ENCODE measurements at regions of chr6 and their contacts with region 1.

Region 1: GRCh38 chr6:12890171-12890790 is 173.7 kb downstream of the PHACTR1 start:
- DNase-seq: peak; percentile 45
- ATAC-seq: peak; percentile 39
- H3K4me3 Mint-ChIP-seq: no peak overlapping the region
- H3K27ac Mint-ChIP-seq: no peak overlapping the region
- H3K4me1 Mint-ChIP-seq: no peaks in the 10 kb centered on the region
- H3K27me3 Mint-ChIP-seq: peaks cover 1% of the 10 kb centered on the region
- CTCF ChIP-seq: peak; percentile 22

Region 2: GRCh38 chr6:12637960-12638641 is 252.2 kb before region 1 on chr6:
- CTCF ChIA-PET with region 1: interaction called, 16 read pairs
- POLR2A ChIA-PET with region 1: no interaction called
- intact Hi-C with region 1: loop called (anchors 5 kb)
- DNase-seq: peak; percentile 70
- ATAC-seq: peak; percentile 78
- H3K4me3 Mint-ChIP-seq: no peak overlapping the region
- H3K27ac Mint-ChIP-seq: no peak overlapping the region
- H3K4me1 Mint-ChIP-seq: peaks cover 3% of the 10 kb centered on the region
- H3K27me3 Mint-ChIP-seq: peaks cover 28% of the 10 kb centered on the region
- CTCF ChIP-seq: peak; percentile 76

Region 3: GRCh38 chr6:13012977-13013680 is 122.8 kb after region 1 on chr6:
- CTCF ChIA-PET with region 1: no interaction called
- POLR2A ChIA-PET with region 1: no interaction called
- intact Hi-C with region 1: no loop called
- DNase-seq: peak; percentile 19
- ATAC-seq: peak; percentile 45
- H3K4me3 Mint-ChIP-seq: peak overlapping the region; percentile 58
- H3K27ac Mint-ChIP-seq: no peak overlapping the region
- H3K4me1 Mint-ChIP-seq: peaks cover 3% of the 10 kb centered on the region
- H3K27me3 Mint-ChIP-seq: peaks cover 47% of the 10 kb centered on the region
- CTCF ChIP-seq: no peak

Measured in activated CD8-positive, alpha-beta T cell treated with anti-CD3 and anti-CD28 coated beads for 36 hours (primary cell).